ENCODE measurements at regions of chr4 and their contacts with region 1.

Region 1: GRCh38 chr4:152500800-152501434 is 35.0 kb downstream of the FBXW7 start:
- DNase-seq: peak; percentile 79
- H3K4me3 Mint-ChIP-seq: no peak overlapping the region
- H3K27ac Mint-ChIP-seq: no peak overlapping the region
- H3K4me1 Mint-ChIP-seq: peaks cover 15% of the 10 kb centered on the region
- H3K27me3 Mint-ChIP-seq: no peaks in the 10 kb centered on the region

Region 2: DNA sequence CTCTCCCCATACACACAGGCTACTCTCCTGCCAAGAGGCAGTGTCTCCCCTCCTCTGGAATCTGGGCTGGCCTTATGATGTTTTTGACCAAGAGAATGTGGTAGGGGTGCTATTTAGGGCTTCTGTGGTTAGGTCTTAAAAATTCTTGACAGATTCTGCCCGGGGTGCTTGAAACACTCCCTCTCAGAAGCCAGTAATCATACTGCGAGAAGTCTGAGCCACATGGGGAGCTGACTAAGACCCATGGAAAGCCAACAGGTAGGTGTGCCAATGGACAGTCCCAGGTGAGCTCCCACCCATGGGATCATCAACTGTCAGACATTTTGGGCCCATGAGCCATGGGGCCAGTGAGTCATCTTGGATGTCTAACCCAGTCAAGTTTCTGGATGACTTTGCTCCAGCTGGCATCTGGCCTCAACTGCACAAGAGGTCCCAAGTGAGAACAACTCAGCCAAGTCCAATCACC is 280.7 kb before region 1 on chr4:
- CTCF ChIA-PET with region 1: no interaction called
- intact Hi-C with region 1: no loop called
- DNase-seq: peak; percentile 72
- H3K4me3 Mint-ChIP-seq: no peak overlapping the region
- H3K27ac Mint-ChIP-seq: peak overlapping the region; percentile 41
- H3K4me1 Mint-ChIP-seq: peaks cover 29% of the 10 kb centered on the region
- H3K27me3 Mint-ChIP-seq: no peaks in the 10 kb centered on the region

Region 3: GRCh38 chr4:152454398-152455011 is 46.4 kb before region 1 on chr4:
- CTCF ChIA-PET with region 1: interaction called, 9 read pairs
- intact Hi-C with region 1: loop called (anchors 1 kb)
- DNase-seq: no peak
- H3K4me3 Mint-ChIP-seq: no peak overlapping the region
- H3K27ac Mint-ChIP-seq: no peak overlapping the region
- H3K4me1 Mint-ChIP-seq: peaks cover 32% of the 10 kb centered on the region
- H3K27me3 Mint-ChIP-seq: no peaks in the 10 kb centered on the region

Region 4: GRCh38 chr4:152515678-152516077 is 14.8 kb after region 1 on chr4:
- CTCF ChIA-PET with region 1: interaction called, 23 read pairs
- intact Hi-C with region 1: no loop called
- DNase-seq: no peak
- H3K4me3 Mint-ChIP-seq: no peak overlapping the region
- H3K27ac Mint-ChIP-seq: no peak overlapping the region
- H3K4me1 Mint-ChIP-seq: peaks cover 38% of the 10 kb centered on the region
- H3K27me3 Mint-ChIP-seq: no peaks in the 10 kb centered on the region

Region 5: GRCh38 chr4:152559641-152560040 is 58.7 kb after region 1 on chr4:
- CTCF ChIA-PET with region 1: interaction called, 16 read pairs
- intact Hi-C with region 1: loop called (anchors 1 kb)
- DNase-seq: no peak
- H3K4me3 Mint-ChIP-seq: no peak overlapping the region
- H3K27ac Mint-ChIP-seq: no peak overlapping the region
- H3K4me1 Mint-ChIP-seq: peaks cover 15% of the 10 kb centered on the region
- H3K27me3 Mint-ChIP-seq: no peaks in the 10 kb centered on the region

Region 6: GRCh38 chr4:152640058-152640833 is 139.3 kb after region 1 on chr4:
- CTCF ChIA-PET with region 1: interaction called, 182 read pairs
- intact Hi-C with region 1: loop called (anchors 1 kb)
- DNase-seq: no peak
- H3K4me3 Mint-ChIP-seq: no peak overlapping the region
- H3K27ac Mint-ChIP-seq: no peak overlapping the region
- H3K4me1 Mint-ChIP-seq: peaks cover 30% of the 10 kb centered on the region
- H3K27me3 Mint-ChIP-seq: no peaks in the 10 kb centered on the region

Region 7: DNA sequence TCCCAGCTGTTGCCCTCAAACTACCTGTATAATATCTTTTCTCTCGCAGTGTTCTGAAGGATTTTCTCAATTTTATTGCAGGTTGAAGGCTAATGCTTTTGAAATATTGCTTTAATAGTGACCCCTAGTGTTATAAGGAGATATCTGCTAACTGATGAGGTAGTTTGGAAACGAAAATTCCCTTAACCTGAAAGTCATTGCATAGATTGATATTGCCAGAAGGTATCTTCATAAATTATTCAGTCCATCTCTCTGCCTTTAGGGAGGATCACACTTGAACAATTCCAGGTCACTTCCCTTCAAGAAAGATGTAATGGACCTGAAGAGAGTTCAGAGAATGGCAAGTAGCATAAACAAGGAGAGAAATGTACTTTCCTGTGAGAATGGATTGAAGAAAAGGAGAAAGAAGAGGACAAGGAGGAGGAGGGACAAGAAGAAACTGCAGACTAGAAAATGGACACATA is 234.5 kb after region 1 on chr4:
- CTCF ChIA-PET with region 1: interaction called, 17 read pairs
- intact Hi-C with region 1: loop called (anchors 1 kb)
- DNase-seq: no peak
- H3K4me3 Mint-ChIP-seq: no peak overlapping the region
- H3K27ac Mint-ChIP-seq: no peak overlapping the region
- H3K4me1 Mint-ChIP-seq: no peaks in the 10 kb centered on the region
- H3K27me3 Mint-ChIP-seq: peaks cover 3% of the 10 kb centered on the region